Activated CD8-positive, alpha-beta T cell treated with anti-CD3 and anti-CD28 coated beads, Interleukin-2, amount 10 ng/mL, durations not matched to agents 7 days and 5 days (primary cell): ENCODE measurements at regions of chr17 and their contacts with region 1.

Region 1: GRCh38 chr17:8091033-8091687 is 3.6 kb upstream of the ALOX12B start:
- DNase-seq: no peak
- ATAC-seq: no peak
- H3K4me3 Mint-ChIP-seq: no peak overlapping the region
- H3K27ac Mint-ChIP-seq: no peak overlapping the region
- H3K4me1 Mint-ChIP-seq: peaks cover 6% of the 10 kb centered on the region
- H3K27me3 Mint-ChIP-seq: peaks cover 24% of the 10 kb centered on the region

Region 2: GRCh38 chr17:8073627-8074484 is 17.3 kb before region 1 on chr17:
- CTCF ChIA-PET with region 1: interaction called, 42 read pairs
- POLR2A ChIA-PET with region 1: no interaction called
- DNase-seq: peak; percentile 87
- ATAC-seq: peak; percentile 87
- H3K4me3 Mint-ChIP-seq: peak overlapping the region; percentile 54
- H3K27ac Mint-ChIP-seq: no peak overlapping the region
- H3K4me1 Mint-ChIP-seq: peaks cover 22% of the 10 kb centered on the region
- H3K27me3 Mint-ChIP-seq: peaks cover 52% of the 10 kb centered on the region

Region 3: DNA sequence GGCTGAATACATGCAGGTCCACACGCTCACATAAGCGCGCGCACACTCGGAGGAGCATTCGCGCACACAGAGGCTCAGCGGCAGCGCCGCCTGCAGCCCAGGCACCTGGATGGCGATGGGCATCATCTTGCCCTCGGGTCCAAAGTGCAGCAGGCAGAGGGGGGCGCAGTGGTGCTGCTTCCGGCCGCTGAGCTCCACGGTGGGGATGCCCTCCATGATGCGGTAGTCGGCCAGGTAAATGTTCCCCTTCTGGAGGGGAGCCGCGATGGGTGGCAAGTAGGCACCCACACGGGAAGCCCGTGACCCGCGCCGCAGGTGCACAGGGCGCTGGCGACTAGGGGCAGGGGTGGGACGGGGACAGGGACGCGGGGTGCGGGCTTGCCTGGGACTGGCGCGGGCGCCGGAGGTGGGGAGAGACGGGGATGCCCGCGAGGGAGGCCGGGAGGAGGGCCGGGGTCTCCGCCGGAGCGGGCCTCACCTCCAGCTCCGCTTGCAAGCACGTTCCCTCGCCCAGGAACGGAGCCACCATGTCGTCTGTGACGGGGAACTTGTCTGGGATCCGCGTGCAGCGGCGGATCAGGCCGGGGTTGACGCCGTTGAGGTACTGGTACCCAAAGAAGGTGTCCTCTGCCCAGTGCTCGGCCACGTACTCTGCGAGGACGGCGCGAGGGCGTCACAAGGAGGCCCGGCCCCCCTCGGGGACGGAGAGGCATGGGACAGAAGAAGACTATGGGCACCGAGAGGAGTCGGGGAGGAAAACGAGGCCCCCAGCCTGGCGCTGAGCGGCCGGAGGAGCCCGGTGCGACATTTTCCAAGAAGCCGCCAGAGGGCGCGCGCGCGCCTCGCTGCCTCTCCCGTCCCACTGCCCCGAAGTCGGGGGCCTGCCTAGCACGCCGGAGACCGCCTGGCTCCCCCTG is 11.6 kb before region 1 on chr17:
- CTCF ChIA-PET with region 1: interaction called, 42 read pairs
- POLR2A ChIA-PET with region 1: no interaction called
- DNase-seq: peak; percentile 85
- ATAC-seq: peak; percentile 87
- H3K4me3 Mint-ChIP-seq: peak overlapping the region; percentile 86
- H3K27ac Mint-ChIP-seq: peak overlapping the region; percentile 83
- H3K4me1 Mint-ChIP-seq: peaks cover 20% of the 10 kb centered on the region
- H3K27me3 Mint-ChIP-seq: peaks cover 16% of the 10 kb centered on the region

Region 4: DNA sequence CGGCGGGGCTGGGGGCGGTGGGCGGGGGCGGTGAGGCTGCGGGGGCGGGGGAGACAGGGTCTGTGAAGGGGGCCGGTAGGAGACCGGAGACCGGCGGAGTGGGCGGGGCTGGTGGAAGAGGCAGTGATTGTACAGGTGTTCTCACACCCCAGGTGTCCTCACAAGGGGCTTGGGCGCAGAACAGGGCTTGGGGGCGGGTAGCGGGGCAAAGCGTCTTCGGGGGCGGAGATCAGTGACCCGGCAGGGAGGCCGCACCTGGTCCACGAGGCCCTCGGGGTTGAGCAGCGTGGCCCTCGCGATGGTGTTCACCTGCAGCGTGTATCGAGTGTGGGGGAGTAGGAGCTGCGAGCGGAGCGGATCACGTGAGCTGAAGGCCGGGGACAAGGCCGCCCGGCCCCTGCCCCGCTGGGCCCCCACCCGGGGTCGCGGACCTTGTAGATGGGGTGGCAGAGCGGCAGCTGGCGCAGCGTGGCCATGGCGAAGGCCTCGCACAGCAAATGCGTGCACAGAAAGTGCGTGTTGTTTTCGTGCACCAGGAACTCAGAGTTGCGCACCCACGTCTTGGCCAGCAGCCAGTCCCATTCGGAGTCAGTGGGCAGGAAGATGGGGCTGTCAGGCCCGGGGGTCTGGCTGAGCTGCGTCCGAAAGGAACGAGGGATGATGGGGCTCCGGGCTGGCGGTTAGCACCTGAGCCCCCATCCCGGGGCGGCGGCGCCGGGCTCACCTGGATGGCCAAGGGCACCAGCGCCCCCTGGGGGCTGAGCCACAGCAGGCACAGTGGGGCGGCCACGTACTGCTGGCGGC is 18.7 kb after region 1 on chr17:
- CTCF ChIA-PET with region 1: interaction called, 174 read pairs
- POLR2A ChIA-PET with region 1: no interaction called
- DNase-seq: peak; percentile 81
- ATAC-seq: peak; percentile 98
- H3K4me3 Mint-ChIP-seq: peak overlapping the region; percentile 41
- H3K27ac Mint-ChIP-seq: no peak overlapping the region
- H3K4me1 Mint-ChIP-seq: peaks cover 13% of the 10 kb centered on the region
- H3K27me3 Mint-ChIP-seq: peaks cover 34% of the 10 kb centered on the region